ENCODE measurements at regions of chr19 and their contacts with region 1.

Region 1: DNA sequence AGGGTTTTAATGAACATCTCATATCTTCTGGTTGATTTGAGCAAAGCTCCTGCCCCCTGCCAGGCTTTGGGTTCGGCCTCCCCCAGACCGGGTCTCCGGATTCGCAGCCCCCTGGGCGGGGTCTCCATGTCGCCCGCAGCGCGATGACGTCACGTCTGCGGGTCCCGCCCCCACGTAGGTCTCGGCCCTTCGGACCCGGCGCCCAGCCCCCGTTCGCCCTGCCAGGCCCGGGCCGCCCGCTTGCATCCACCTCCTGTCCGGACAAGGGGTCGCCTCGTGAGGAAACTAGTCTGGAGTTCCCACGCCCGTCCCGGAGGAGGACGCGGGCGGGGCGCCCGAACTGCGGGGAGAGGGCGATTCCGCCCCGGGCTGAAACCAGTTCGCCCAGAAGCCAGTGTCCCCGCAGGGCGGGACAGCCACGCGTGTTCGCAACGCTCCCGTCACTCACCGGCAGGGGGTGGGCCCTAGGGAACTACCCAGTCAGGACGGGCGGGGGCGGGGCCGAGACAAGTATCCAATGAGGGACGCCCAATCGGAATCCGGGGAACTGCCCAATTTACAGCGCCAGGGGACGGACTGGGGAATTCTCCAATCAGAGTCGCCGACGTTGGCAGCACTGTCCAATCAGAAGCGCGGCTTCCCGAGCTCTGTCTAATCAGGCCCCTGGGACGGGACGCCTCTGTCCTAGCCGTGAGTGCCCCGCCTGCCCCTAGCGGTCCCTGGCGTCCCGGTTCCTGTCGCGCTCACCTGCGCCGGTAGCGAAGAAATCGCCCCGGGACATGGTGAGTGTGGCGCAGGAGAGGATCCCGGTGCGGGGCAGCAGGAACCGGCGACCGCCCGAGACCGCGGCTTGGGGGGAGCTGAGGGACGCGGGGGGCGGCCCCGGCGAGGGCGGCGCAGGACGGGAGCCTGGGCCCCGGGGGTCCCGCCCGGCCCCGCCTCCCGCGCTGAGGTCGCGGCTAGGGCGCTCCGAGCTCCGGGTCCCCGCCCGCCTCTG is at the start of gene ZNF555:
- DNase-seq: peak; percentile 99
- ATAC-seq: peak; percentile 100
- H3K4me3 Mint-ChIP-seq: peak within 1 kb of the TSS; percentile 77
- H3K27ac Mint-ChIP-seq: peak within 1 kb of the TSS; percentile 55
- H3K4me1 Mint-ChIP-seq: peaks cover 11% of the 10 kb centered on the region
- H3K27me3 Mint-ChIP-seq: no peaks in the 10 kb centered on the region
- total RNA-seq, gene ZNF555: 1.9 TPM

Region 2: GRCh38 chr19:2427429-2428320 is 413.4 kb before region 1 on chr19 and contains the start of gene TIMM13:
- CTCF ChIA-PET with region 1: no interaction called
- POLR2A ChIA-PET with region 1: no interaction called
- intact Hi-C with region 1: loop called in 1 of 2 experiments (anchors 1 kb)
- DNase-seq: peak; percentile 98
- ATAC-seq: peak; percentile 95
- H3K4me3 Mint-ChIP-seq: peak within 1 kb of the TSS; percentile 86
- H3K27ac Mint-ChIP-seq: peak within 1 kb of the TSS; percentile 96
- H3K4me1 Mint-ChIP-seq: peaks cover 5% of the 10 kb centered on the region
- H3K27me3 Mint-ChIP-seq: no peaks in the 10 kb centered on the region
- total RNA-seq, gene TIMM13: 70.7 to 104 TPM

Region 3: DNA sequence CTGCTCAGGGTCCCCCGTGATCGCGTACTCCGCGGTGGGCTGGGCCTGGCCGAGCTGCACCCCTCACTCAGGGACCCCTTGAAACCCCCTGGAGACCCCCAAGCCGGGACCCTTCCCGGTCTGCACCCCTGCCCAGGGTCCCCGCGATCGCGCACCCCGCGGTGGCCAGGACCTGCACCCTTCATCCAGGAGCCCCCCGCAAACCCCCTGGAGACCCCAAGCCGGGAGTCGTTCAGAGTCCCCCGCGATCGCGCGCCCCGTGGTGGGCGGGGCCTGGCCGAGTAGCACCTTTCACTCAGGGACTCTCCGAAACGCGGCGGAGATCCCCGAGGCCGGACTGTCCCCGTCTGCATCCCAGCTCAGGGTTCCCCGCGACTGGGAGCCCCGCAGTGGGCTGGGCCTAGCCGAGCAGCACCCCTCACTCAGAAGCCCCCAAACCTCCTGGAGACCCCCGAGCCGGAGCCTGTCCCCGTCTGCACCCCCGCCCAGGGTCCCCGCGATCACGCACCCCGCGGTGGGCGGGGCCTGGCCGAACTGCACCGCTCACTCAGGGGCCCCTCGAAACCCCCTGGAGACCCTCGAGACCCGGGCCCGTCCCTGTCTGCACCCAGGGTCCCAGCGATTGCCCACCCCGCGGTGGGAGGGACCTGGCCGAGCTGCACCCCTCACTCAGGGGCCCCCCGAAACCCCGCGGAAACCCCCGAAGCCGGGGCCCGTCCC is 385.1 kb before region 1 on chr19:
- CTCF ChIA-PET with region 1: no interaction called
- POLR2A ChIA-PET with region 1: no interaction called
- intact Hi-C with region 1: loop called in 1 of 2 experiments (anchors 2 kb)
- DNase-seq: peak; percentile 73
- ATAC-seq: peak; percentile 47
- H3K4me3 Mint-ChIP-seq: peak overlapping the region; percentile 84
- H3K27ac Mint-ChIP-seq: peak overlapping the region; percentile 88
- H3K4me1 Mint-ChIP-seq: peaks cover 16% of the 10 kb centered on the region
- H3K27me3 Mint-ChIP-seq: no peaks in the 10 kb centered on the region

Region 4: GRCh38 chr19:2739602-2740313 is 101.3 kb before region 1 on chr19 and contains the start of gene SLC39A3:
- CTCF ChIA-PET with region 1: no interaction called
- POLR2A ChIA-PET with region 1: no interaction called
- intact Hi-C with region 1: loop called in 1 of 2 experiments (anchors 1 kb)
- DNase-seq: peak; percentile 99
- ATAC-seq: peak; percentile 100
- H3K4me3 Mint-ChIP-seq: peak within 1 kb of the TSS; percentile 95
- H3K27ac Mint-ChIP-seq: peak within 1 kb of the TSS; percentile 70
- H3K4me1 Mint-ChIP-seq: peaks cover 14% of the 10 kb centered on the region
- H3K27me3 Mint-ChIP-seq: peaks cover 8% of the 10 kb centered on the region
- total RNA-seq, gene SLC39A3: 26.6 to 46.0 TPM

Region 5: DNA sequence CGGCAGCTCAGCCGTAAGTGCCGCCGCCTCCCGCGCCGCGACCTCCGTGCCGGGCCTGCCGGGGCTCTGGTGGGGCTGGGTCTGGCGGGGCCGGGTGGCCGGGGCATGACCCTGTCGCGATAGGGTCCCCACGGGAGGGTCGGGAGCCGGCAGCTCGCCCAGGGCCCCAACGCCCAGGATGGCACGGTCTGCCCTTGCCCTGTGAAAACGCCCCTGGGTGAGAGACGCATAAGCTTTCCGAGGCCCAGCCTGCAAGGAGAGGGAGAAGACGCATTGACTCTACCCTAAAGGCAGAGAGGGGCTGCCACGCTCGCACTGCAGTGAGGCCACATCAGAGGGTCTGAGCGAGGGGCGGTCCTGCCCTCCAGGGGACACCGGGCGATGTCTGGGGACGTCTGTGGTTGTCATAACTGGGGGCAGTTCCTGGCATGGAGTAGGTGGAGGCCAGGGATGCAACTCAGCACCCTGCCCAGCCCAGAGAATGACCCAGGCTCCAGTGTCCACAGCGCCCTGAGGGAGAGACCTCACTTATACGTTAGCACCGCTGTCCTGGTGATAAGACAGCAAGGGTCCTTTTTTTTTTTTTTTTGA is 20.9 kb before region 1 on chr19:
- CTCF ChIA-PET with region 1: interaction called, 9 read pairs
- POLR2A ChIA-PET with region 1: no interaction called
- intact Hi-C with region 1: loop called in 1 of 2 experiments (anchors 1 kb)
- DNase-seq: peak; percentile 31
- ATAC-seq: no peak
- H3K4me3 Mint-ChIP-seq: peak overlapping the region; percentile 78
- H3K27ac Mint-ChIP-seq: peak overlapping the region; percentile 31
- H3K4me1 Mint-ChIP-seq: peaks cover 12% of the 10 kb centered on the region
- H3K27me3 Mint-ChIP-seq: no peaks in the 10 kb centered on the region

Region 6: DNA sequence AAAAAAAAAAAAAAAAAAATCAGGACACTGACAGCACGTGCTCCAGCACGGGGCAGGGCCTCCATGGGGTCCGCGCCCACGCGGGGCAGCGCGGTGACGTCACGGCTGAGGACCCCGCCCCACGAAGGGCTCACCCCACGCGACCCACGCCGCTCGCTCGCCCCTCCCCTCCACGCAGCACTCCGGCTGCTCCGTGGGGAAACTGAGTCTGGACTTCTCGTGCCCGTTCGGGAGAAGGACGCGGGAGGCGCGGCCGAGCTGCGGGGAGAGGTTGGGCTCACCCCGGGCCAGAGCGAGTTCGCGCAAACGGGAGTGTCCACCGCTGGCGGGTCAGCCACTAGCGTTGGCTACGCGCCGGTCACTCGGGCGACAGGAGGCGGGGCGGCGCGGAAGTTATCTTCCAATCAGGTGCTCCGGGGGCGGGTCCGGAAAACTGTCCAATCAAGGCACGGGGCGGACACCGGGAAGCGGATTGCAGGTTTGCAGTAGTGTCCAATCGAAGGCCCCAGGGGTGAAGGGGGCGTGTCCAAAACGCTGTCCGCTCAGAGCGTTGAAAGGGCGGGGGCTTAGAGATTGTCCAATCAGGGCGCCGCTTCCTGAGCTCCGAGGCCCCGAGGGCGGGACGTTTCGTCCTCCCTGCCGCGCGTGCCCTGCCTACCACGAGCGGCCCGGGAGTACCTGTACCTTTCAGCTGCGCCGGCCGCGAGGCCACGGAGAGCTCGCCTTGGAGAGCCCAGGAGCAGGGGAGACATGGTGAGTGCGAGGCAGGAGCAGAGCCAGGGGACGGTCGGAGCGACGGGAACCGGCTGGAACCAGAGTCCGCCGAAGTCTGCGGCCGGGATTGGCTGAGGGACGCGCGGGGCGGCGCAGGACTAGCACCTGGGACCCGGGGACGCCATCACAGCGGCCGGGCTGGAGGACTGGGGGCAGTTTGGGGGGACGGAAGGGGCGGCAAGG is 59.5 kb after region 1 on chr19 and contains the start of gene ZNF57:
- CTCF ChIA-PET with region 1: no interaction called
- POLR2A ChIA-PET with region 1: no interaction called
- intact Hi-C with region 1: loop called (anchors 1 kb)
- DNase-seq: peak; percentile 100
- ATAC-seq: peak; percentile 99
- H3K4me3 Mint-ChIP-seq: peak within 1 kb of the TSS; percentile 98
- H3K27ac Mint-ChIP-seq: peak within 1 kb of the TSS; percentile 96
- H3K4me1 Mint-ChIP-seq: peaks cover 18% of the 10 kb centered on the region
- H3K27me3 Mint-ChIP-seq: no peaks in the 10 kb centered on the region
- total RNA-seq, gene ZNF57: 5.9 to 7.1 TPM

Region 7: DNA sequence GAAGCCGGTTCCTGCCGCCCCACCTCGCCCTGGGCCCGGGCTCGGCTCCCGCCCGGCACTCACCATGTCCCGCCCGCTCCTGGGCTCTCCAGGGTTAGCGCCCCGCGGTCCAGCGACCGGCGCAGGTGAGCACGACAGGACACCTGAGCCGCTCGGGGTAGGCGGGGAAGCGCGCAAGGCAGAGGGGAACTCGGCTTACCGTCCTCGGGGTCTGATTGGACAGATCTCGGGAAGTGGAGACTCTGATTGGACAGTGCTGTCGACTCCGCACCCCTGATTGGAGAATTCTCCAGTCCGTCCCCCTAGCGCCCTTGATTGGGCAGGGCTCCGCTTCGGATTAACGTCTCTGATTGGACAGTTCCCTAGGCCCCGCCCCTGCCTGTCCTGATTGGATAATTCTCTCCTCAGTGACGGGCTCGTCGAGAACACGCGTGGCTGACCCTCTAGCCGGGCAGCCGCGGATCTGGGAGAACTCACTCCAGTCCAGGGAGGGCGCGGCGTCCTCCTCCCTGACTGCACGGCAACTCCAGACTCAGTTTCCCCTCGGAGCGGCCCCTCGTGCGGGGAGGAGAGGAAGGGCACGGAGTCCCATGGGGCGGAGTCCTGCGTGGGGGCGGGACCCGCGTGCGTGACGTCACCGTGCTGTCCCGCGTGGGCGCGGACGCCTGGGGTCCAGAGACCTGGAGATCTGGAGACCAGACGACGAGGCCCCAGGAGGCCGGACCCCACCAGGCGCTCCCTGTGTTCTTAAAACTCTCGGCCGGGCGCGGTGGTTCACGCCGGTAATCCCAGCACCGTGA is 103.9 kb after region 1 on chr19 and contains the start of gene ZNF77:
- CTCF ChIA-PET with region 1: interaction called, 6 read pairs
- POLR2A ChIA-PET with region 1: no interaction called
- intact Hi-C with region 1: loop called in 1 of 2 experiments (anchors 1 kb)
- DNase-seq: peak; percentile 99
- ATAC-seq: peak; percentile 100
- H3K4me3 Mint-ChIP-seq: peak within 1 kb of the TSS; percentile 83
- H3K27ac Mint-ChIP-seq: peak within 1 kb of the TSS; percentile 97
- H3K4me1 Mint-ChIP-seq: peaks cover 34% of the 10 kb centered on the region
- H3K27me3 Mint-ChIP-seq: no peaks in the 10 kb centered on the region
- total RNA-seq, gene ZNF77: 4.3 to 4.8 TPM